Aorta (tissue), 5 donors: ENCODE measurements at regions of chr7 and their contacts with region 1.

Region 1: GRCh38 chr7:29748286-29749108 is 57.8 kb upstream of the WIPF3 start:
- DNase-seq: no peak
- ATAC-seq: peak; percentile 82
- H3K4me3 ChIP-seq: no peak overlapping the region
- H3K27ac ChIP-seq: no peak overlapping the region
- H3K4me1 ChIP-seq: no peaks in the 10 kb centered on the region
- H3K27me3 ChIP-seq: no peaks in the 10 kb centered on the region

Region 2: DNA sequence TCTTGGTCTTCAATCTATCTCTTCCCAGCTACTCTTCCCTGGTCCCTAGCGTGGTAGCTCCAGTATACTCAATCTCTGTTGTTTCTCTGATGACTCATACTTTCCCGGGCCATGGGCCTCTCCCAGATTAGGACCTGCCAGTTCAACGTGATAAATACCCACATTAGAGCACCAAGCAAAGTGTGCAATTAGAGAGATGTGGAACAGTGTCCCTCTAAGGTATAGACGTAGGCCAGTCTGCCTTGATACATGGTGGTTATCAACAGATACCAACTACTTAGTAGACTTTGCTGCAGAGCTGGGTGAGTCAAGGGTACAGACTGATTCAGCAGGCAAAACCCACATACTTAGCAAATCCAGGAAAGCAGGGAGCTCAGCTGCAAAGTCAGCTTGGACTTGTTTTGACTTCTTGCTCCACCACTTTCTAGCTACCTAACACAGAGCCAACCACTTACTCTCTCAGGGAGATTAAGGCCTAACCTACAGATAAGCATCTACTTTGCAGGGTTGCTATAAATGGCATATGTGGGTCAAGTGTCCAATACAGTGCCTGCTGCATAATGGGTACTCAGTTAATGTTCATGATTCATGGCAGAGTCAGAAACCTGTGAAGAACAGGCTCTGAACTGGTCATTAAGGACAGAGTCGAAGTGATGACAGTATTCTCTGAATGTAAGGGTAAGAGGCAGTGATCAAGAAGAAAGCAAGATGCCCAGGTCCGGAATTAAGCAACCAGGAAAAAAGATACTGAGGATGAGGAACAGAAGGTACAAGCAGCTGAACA is 377.8 kb before region 1 on chr7:
- intact Hi-C with region 1: no loop called
- DNase-seq: no peak
- ATAC-seq: peak; percentile 79
- H3K4me3 ChIP-seq: no peak overlapping the region
- H3K27ac ChIP-seq: no peak overlapping the region
- H3K4me1 ChIP-seq: peaks cover 3 to 5% of the 10 kb centered on the region in 2 donors
- H3K27me3 ChIP-seq: no peaks in the 10 kb centered on the region

Region 3: GRCh38 chr7:29639881-29640595 is 108.5 kb before region 1 on chr7:
- intact Hi-C with region 1: loop called in 1 of 2 experiments (anchors 10 kb)
- DNase-seq: no peak
- ATAC-seq: no peak
- H3K4me3 ChIP-seq: no peak overlapping the region
- H3K27ac ChIP-seq: no peak overlapping the region
- H3K4me1 ChIP-seq: no peaks in the 10 kb centered on the region
- H3K27me3 ChIP-seq: no peaks in the 10 kb centered on the region

Region 4: DNA sequence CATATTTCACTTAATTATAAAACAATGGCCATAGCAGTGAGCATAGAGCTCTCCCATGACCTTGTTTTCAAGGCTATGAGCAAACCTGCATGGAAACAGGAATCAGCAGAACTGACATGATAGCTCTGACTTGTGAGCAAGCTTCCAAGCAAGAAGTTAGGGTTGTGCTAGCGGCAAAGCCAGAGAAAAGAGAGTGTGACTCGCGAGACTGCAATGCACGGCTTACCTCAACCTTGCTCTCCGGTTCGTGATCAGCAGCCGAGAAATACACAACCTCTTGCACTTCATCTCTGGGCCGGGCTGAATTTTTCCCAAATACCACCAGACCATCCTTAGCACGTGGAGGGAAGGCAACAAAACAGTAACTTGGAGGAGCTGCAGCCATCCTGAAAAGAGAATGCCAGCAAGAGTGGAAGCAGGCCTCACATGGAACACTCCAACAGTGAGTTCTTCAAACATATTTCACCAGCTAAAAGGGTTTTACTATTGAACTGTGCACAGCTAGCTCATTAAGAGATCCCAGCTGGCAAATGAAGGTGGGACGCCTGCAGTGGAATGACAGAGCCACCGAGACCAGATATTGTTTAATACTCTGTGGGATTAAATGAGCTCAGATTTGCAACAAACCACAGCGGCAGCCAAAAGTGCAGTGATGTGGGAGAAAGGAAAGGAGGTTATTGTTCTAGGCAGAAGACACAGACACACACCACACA is 220.3 kb after region 1 on chr7:
- intact Hi-C with region 1: no loop called
- DNase-seq: no peak
- ATAC-seq: no peak
- H3K4me3 ChIP-seq: no peak overlapping the region
- H3K27ac ChIP-seq: no peak overlapping the region
- H3K4me1 ChIP-seq: peaks cover 0 to 4% of the 10 kb centered on the region in 2 donors
- H3K27me3 ChIP-seq: no peaks in the 10 kb centered on the region